ENCODE measurements at regions of chr11 and their contacts with region 1.

Region 1: DNA sequence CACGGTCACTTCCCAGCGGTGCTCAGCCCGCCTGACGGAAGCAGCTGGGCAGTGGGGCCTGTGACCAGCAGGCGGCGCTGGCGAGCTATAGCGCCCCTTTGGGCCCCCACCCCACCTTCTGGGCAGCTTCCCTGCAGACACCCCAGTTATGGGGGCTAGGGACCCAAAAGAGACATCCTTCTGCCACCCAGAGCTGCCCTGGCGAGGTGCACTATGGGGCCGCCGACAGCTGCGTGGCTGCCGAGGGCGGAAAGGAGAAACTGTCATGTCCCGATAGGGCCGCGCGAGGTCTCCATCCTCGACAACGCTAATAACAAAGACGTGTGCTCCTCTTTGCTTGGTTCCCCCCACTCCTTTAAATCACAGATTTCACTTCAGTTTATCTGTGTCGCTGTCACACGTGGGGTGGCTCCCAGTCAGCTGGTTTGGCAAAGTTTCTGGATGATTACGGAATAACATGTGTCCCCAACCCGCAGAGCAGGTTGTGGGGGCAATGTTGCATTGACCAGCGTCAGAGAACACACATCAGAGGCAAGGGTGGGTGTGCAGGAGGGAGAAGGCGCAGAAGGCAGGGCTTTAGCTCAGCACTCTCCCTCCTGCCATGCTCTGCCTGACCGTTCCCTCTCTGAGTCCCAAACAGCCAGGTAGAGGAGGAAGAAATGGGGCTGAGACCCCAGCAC is 674 bp upstream of the MYO7A start:
- DNase-seq: peak in 1 of 2 experiments; percentile 89
- H3K4me3 ChIP-seq: peak overlapping the region; percentile 5 to 59 (median 36); a peak in 7 of 8 replicates
- H3K27ac ChIP-seq: no peak overlapping the region
- H3K4me1 ChIP-seq: peaks cover 4 to 15% (median 9%) of the 10 kb centered on the region in 4 experiments
- H3K27me3 ChIP-seq: peaks cover 0 to 2% (median 0%) of the 10 kb centered on the region in 4 experiments; a peak in 1 of 7 replicates
- CTCF ChIP-seq: peak; percentile 89 to 98 (median 95)
- EP300 ChIP-seq: no peak
- POLR2A ChIP-seq: no peak
- RAD21 ChIP-seq: peak; percentile 78 to 85

Region 2: DNA sequence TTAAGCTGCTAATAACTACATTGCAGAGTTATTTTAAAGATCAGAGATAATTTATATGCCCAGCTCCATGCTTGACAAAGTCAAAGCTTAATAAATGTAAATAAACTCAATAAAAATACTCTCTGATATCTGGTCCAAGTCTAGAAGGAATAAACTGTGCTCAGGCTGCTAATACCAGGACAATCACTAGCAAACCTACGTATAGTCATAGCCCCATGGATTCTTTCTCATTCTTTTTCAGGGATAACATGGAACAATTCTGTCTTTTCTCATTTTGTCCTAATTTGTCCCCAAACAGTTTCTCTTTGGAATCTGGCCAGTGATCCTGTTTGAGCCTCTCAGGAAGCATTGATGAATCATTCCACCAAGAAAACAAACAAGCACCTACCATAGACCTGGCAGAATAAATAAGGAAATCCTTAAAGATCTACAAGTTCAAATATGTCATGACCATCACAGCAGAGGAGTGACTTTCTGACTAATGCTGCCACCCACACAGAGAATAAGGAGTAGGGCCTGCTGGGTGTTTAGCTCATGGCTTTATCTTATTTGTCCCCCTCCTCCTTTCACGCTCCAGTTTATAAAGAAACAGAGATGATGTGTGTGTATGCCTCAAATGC is 107.3 kb before region 1 on chr11:
- CTCF ChIA-PET with region 1: no interaction called
- POLR2A ChIA-PET with region 1: no interaction called
- DNase-seq: no peak
- H3K4me3 ChIP-seq: no peak overlapping the region
- H3K27ac ChIP-seq: no peak overlapping the region
- H3K4me1 ChIP-seq: peaks cover 0 to 4% (median 1%) of the 10 kb centered on the region in 4 experiments; a peak in 2 of 7 replicates
- H3K27me3 ChIP-seq: no peaks in the 10 kb centered on the region
- CTCF ChIP-seq: no peak
- EP300 ChIP-seq: no peak
- POLR2A ChIP-seq: no peak
- RAD21 ChIP-seq: no peak

Region 3: GRCh38 chr11:77047007-77047927 is 80.1 kb before region 1 on chr11:
- CTCF ChIA-PET with region 1: interaction called, 16 read pairs
- POLR2A ChIA-PET with region 1: no interaction called
- DNase-seq: peak in 1 of 2 experiments; percentile 64
- H3K4me3 ChIP-seq: peak overlapping the region in 1 of 4 experiments; percentile 34; a peak in 1 of 8 replicates
- H3K27ac ChIP-seq: no peak overlapping the region
- H3K4me1 ChIP-seq: peaks cover 0 to 4% (median 0%) of the 10 kb centered on the region in 4 experiments; a peak in 3 of 7 replicates
- H3K27me3 ChIP-seq: peaks cover 0 to 5% (median under 1%) of the 10 kb centered on the region in 4 experiments; a peak in 2 of 7 replicates
- CTCF ChIP-seq: peak in 2 of 3 experiments; percentile 55 to 60; a peak in 3 of 4 replicates
- EP300 ChIP-seq: no peak
- POLR2A ChIP-seq: no peak
- RAD21 ChIP-seq: peak; percentile 49 to 54

Region 4: GRCh38 chr11:77091146-77091940 is 36.0 kb before region 1 on chr11:
- CTCF ChIA-PET with region 1: interaction called, 19 read pairs
- POLR2A ChIA-PET with region 1: no interaction called
- DNase-seq: peak; percentile 73 to 97
- H3K4me3 ChIP-seq: no peak overlapping the region
- H3K27ac ChIP-seq: no peak overlapping the region
- H3K4me1 ChIP-seq: peaks cover 0 to 8% (median 2%) of the 10 kb centered on the region in 4 experiments; a peak in 3 of 7 replicates
- H3K27me3 ChIP-seq: no peaks in the 10 kb centered on the region
- CTCF ChIP-seq: peak; percentile 96 to 100 (median 100)
- EP300 ChIP-seq: no peak
- POLR2A ChIP-seq: no peak
- RAD21 ChIP-seq: peak; percentile 92 to 93

Region 5: DNA sequence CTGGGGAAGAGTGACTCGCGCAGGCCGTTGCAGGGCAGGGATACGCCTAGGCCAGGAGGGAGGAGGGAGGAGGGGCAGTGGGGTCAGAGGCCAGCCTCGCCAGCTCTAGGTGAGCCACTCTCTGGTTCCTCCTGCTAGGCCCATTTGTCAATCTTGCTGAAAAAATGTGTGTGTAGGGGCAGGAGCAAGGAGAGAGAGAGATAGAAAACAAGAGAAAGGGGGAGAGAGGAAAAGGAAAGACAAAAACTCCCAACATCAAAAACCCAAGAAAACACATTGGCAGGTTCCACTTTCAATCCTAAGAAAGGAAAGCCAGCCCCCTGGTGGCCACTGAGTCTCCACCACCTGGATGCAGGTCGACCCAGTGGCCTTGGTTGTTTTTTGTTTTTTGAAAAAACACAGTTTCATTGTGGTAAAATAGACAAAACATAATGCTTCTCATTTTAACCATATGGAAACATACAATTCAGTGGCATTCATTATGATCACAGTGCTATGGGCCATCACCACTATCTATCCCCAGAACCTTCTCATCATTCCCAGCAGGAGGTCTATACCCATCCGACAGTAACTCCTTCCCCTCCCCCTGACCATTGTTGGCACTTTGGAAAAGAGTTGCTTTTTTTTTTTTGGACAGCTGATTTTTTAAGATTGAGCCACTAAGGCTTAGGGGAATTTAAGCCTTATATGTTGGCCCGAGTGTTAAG is 13.8 kb before region 1 on chr11:
- CTCF ChIA-PET with region 1: interaction called, 170 read pairs
- POLR2A ChIA-PET with region 1: interaction called, 3 read pairs
- DNase-seq: peak in 1 of 2 experiments; percentile 75
- H3K4me3 ChIP-seq: no peak overlapping the region
- H3K27ac ChIP-seq: no peak overlapping the region
- H3K4me1 ChIP-seq: peaks cover 0 to 3% (median 1%) of the 10 kb centered on the region in 4 experiments; a peak in 3 of 7 replicates
- H3K27me3 ChIP-seq: no peaks in the 10 kb centered on the region
- CTCF ChIP-seq: peak; percentile 44 to 66 (median 59)
- EP300 ChIP-seq: no peak
- POLR2A ChIP-seq: no peak
- RAD21 ChIP-seq: peak; percentile 47 to 50

Region 6: DNA sequence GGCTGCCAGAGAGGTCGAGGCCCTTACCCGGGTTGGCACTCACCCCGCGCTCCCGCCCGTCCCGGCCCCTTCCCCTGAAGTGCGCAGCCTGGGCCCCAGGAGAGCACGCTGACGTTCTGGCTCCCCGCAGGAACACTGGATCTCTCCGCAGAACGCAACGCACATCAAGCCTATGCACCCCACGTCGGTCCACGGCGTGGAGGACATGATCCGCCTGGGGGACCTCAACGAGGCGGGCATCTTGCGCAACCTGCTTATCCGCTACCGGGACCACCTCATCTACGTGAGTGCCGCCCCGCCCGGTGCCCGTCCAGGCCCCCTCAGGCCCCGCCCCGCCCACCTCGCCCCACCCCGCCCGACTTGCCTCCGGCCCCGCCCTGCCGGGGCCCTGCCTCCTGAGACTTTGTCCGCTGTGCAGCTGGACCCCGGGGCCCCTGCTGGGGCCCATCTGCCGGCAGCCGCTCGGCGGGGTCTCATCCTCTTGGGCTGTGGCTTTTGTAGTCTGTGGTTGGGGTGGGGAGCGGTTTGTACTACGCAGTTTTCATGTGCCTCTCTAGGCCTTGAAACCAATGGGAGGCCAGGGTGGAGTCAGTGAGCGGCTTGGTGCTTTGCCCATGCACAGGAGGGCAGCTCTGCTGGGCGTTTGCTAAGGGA is 20.4 kb after region 1 on chr11:
- CTCF ChIA-PET with region 1: interaction called, 104 read pairs
- POLR2A ChIA-PET with region 1: interaction called, 8 read pairs
- DNase-seq: peak; percentile 29 to 79
- H3K4me3 ChIP-seq: peak overlapping the region; percentile 54 to 65 (median 58)
- H3K27ac ChIP-seq: no peak overlapping the region
- H3K4me1 ChIP-seq: peaks cover 0 to 11% (median 5%) of the 10 kb centered on the region in 4 experiments; a peak in 6 of 7 replicates
- H3K27me3 ChIP-seq: peaks cover 0 to 2% (median 0%) of the 10 kb centered on the region in 4 experiments; a peak in 2 of 7 replicates
- CTCF ChIP-seq: no peak
- EP300 ChIP-seq: no peak
- POLR2A ChIP-seq: no peak
- RAD21 ChIP-seq: no peak; a peak in 1 of 4 replicates

Region 7: GRCh38 chr11:77175869-77176539 is 48.6 kb after region 1 on chr11:
- CTCF ChIA-PET with region 1: interaction called, 187 read pairs
- POLR2A ChIA-PET with region 1: interaction called, 4 read pairs
- DNase-seq: peak in 1 of 2 experiments; percentile 73
- H3K4me3 ChIP-seq: no peak overlapping the region
- H3K27ac ChIP-seq: 0 out of 2 replicates have a peak overlapping the region, but pooled peaks have one; percentile 30
- H3K4me1 ChIP-seq: peaks cover 18 to 50% (median 27%) of the 10 kb centered on the region in 4 experiments
- H3K27me3 ChIP-seq: peaks cover 0 to 3% (median 0%) of the 10 kb centered on the region in 4 experiments; a peak in 1 of 7 replicates
- CTCF ChIP-seq: no peak
- EP300 ChIP-seq: no peak
- POLR2A ChIP-seq: no peak
- RAD21 ChIP-seq: no peak

Region 8: DNA sequence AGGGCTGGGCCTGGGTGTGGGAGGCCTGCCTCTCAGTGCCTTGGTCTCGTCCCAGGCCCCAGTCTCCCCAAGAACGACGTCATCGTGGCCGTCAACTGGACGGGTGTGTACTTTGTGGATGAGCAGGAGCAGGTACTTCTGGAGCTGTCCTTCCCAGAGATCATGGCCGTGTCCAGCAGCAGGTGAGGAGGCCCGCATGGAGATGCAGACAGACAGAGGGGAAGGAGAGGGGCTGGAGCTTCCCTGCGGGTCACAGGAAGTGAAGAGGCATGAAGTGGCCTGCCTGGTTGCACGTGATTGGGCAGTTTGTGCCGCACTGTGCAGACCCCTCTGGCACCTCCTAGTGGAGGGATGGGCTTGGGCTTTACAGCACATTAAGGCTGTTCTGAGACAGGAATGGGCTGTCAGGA is 71.1 kb after region 1 on chr11:
- CTCF ChIA-PET with region 1: interaction called, 22 read pairs
- POLR2A ChIA-PET with region 1: no interaction called
- DNase-seq: peak; percentile 44 to 85
- H3K4me3 ChIP-seq: no peak overlapping the region
- H3K27ac ChIP-seq: no peak overlapping the region
- H3K4me1 ChIP-seq: no peaks in the 10 kb centered on the region; a peak in 1 of 7 replicates
- H3K27me3 ChIP-seq: no peaks in the 10 kb centered on the region
- CTCF ChIP-seq: peak in 2 of 3 experiments; percentile 66 to 96; a peak in 3 of 4 replicates
- EP300 ChIP-seq: no peak
- POLR2A ChIP-seq: no peak
- RAD21 ChIP-seq: peak; percentile 58 to 68

Region 9: DNA sequence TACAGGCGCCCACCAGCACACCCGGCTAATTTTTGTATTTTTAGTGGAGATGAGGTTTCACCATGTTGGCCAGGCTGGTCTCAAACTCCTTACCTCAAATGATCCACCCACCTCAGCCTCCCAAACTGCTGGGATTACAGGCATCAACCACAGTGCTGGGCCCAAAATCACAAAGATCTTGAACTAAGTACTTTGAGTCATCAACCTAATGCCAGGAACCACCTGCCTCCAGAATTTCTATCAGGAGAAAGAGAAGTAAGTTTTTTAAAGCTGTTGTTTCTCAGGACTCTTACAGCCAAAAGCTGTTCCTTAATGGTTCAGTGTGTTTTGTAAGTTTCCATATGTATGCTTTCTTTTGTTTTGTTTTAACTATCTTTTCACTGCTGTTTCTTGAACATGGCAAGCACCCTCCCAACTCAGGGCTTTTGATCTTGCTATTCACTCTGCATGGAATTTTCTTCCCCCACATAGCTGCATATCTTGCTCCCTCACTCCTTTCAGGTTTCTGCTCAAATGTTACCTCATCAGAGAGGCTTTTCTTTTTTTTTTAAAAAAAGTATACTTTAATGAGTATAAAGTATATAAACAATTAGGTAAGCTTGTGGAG is 352.5 kb after region 1 on chr11:
- CTCF ChIA-PET with region 1: no interaction called
- POLR2A ChIA-PET with region 1: no interaction called
- DNase-seq: no peak
- H3K4me3 ChIP-seq: no peak overlapping the region; a peak in 1 of 8 replicates
- H3K27ac ChIP-seq: no peak overlapping the region
- H3K4me1 ChIP-seq: peaks cover 1 to 10% (median 5%) of the 10 kb centered on the region in 4 experiments; a peak in 3 of 7 replicates
- H3K27me3 ChIP-seq: no peaks in the 10 kb centered on the region
- CTCF ChIP-seq: no peak
- EP300 ChIP-seq: no peak
- POLR2A ChIP-seq: no peak
- RAD21 ChIP-seq: no peak

Measured in H1 (cell line).